T-cell (primary cell): ENCODE measurements at regions of chr10 and their contacts with region 1.

Region 1: DNA sequence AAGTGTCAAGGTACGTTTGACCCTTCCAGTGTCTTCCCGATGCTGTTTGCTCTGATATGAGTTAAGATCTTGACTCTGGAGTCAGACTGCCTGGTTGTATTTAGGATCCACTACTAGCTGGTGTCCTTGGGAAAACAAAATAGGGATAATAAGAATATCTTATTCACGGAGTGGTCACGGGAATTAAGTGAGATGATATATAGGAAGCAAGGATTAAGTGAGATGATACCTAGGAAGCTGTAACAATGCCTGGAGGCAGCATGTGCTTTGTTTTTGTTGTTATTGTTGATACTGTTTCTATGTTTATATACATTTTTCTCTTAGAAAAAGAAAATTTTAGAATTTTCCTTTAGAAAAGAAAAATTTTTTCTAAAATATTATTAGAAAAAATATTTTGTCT is 87.0 kb downstream of the LYZL1 start:
- DNase-seq: no peak
- ATAC-seq: no peak
- H3K4me3 ChIP-seq: no peak overlapping the region
- H3K4me3 Mint-ChIP-seq: no peak overlapping the region
- H3K27ac ChIP-seq: no peak overlapping the region
- H3K27ac Mint-ChIP-seq: no peak overlapping the region
- H3K4me1 ChIP-seq: peaks cover 0 to 4% of the 10 kb centered on the region in 2 experiments
- H3K4me1 Mint-ChIP-seq: peaks cover 7 to 10% (median 9%) of the 10 kb centered on the region in 3 donors
- H3K27me3 ChIP-seq: peaks cover 0 to 7% of the 10 kb centered on the region in 2 experiments
- H3K27me3 Mint-ChIP-seq: peaks cover 11 to 12% of the 10 kb centered on the region in 2 donors

Region 2: GRCh38 chr10:29297678-29298077 is 78.2 kb before region 1 on chr10:
- CTCF ChIA-PET with region 1: no interaction called
- POLR2A ChIA-PET with region 1: interaction called in 1 of 2 experiments, 15 read pairs
- DNase-seq: no peak
- ATAC-seq: no peak
- H3K4me3 ChIP-seq: no peak overlapping the region
- H3K4me3 Mint-ChIP-seq: no peak overlapping the region
- H3K27ac ChIP-seq: no peak overlapping the region
- H3K27ac Mint-ChIP-seq: no peak overlapping the region
- H3K4me1 ChIP-seq: no peaks in the 10 kb centered on the region
- H3K4me1 Mint-ChIP-seq: no peaks in the 10 kb centered on the region
- H3K27me3 ChIP-seq: peaks cover 0 to 3% of the 10 kb centered on the region in 2 experiments
- H3K27me3 Mint-ChIP-seq: peaks cover 18 to 29% of the 10 kb centered on the region in 2 donors

Region 3: GRCh38 chr10:29407280-29407858 is 31.5 kb after region 1 on chr10:
- CTCF ChIA-PET with region 1: no interaction called
- POLR2A ChIA-PET with region 1: no interaction called
- DNase-seq: no peak
- ATAC-seq: no peak
- H3K4me3 ChIP-seq: no peak overlapping the region
- H3K4me3 Mint-ChIP-seq: no peak overlapping the region
- H3K27ac ChIP-seq: no peak overlapping the region
- H3K27ac Mint-ChIP-seq: no peak overlapping the region
- H3K4me1 ChIP-seq: peaks cover 4 to 7% of the 10 kb centered on the region in 2 experiments
- H3K4me1 Mint-ChIP-seq: peaks cover 19 to 29% (median 26%) of the 10 kb centered on the region in 3 donors
- H3K27me3 ChIP-seq: no peaks in the 10 kb centered on the region
- H3K27me3 Mint-ChIP-seq: no peaks in the 10 kb centered on the region